ENCODE measurements at regions of chr6 and their contacts with region 1.

Region 1: GRCh38 chr6:150334790-150335783 is 33.7 kb upstream of the IYD start:
- DNase-seq: peak in 2 of 5 donors; percentile 27 to 29
- ATAC-seq: peak in 1 of 4 donors; percentile 54
- H3K4me3 ChIP-seq: no peak overlapping the region
- H3K27ac ChIP-seq: no peak overlapping the region
- H3K4me1 ChIP-seq: no peaks in the 10 kb centered on the region
- H3K27me3 ChIP-seq: no peaks in the 10 kb centered on the region
- CTCF ChIP-seq: peak; percentile 69 to 95 (median 84)
- POLR2A ChIP-seq: no peak

Region 2: DNA sequence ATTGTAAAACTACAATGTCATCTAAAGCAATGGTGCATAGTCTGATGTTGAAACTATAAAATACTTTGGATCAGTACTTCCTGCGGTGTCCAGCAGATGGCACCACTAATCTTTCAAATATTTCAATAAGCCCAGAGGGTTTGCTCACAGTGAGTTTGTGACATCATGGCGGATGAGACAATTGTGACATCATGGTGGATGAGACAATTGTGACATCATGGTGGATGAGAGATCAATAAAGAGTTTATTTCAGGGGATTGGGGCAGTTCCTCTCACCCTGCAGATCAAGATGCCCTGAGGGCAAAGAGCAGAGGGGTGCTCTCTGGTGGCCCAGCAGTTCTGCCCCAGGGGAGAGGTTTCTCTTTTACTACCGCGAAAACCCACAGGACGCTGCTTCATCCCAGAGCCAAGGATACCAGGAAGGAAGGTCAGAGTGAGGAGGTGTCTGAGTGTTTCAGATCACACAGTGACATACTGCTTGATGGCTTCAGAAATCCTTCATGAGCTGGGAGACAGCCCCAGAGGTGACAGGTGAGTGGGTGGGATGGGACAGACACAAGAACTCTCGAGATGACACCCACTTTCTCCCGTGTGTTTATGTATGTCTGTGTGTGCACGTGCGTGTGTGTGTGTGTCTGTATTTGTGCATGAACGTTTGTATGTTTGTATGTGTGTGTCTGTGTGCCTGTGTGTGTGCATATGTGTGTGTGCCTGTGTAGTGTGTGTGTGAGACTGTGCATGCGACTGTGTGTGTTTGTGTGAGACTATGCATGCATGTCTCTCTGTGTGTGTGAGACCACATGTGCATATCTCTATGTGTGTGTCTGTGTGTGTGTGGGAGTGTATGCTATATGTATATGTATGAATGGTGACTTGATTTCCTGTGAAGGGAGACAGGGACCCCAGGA is 400.6 kb before region 1 on chr6:
- intact Hi-C with region 1: loop called in 1 of 10 experiments (anchors 10 kb)
- DNase-seq: peak in 2 of 5 donors; percentile 34 to 44
- ATAC-seq: peak in 3 of 4 donors; percentile 65 to 77 (median 69)
- H3K4me3 ChIP-seq: no peak overlapping the region
- H3K27ac ChIP-seq: no peak overlapping the region
- H3K4me1 ChIP-seq: peaks cover 0 to 13% (median 10%) of the 10 kb centered on the region in 12 donors
- H3K27me3 ChIP-seq: peaks cover 22 to 96% (median 64%) of the 10 kb centered on the region in 9 donors
- CTCF ChIP-seq: peak; percentile 70 to 86 (median 79)
- POLR2A ChIP-seq: no peak

Region 3: DNA sequence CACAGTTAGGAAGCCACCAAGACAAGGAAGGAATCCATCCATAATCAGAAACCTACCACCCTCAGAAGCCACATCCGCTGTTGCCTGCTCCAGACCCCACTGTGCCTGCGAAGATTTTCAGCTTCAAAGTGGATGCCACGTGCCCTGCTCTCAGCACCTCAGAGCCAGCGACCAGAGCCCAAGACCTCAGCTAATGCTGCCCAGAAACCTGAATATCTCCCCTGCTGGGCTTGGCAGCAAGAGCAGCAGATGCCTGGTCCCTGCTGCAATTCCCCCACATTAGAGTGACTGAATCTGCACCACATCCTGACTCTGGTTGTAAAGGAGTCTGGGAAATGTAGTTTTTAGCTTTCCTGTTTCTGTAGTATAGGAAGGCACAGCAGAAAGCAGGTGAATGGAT is 255.5 kb before region 1 on chr6:
- intact Hi-C with region 1: loop called (anchors 1 to 2 kb)
- DNase-seq: no peak
- ATAC-seq: no peak
- H3K4me3 ChIP-seq: no peak overlapping the region
- H3K27ac ChIP-seq: no peak overlapping the region
- H3K4me1 ChIP-seq: no peaks in the 10 kb centered on the region
- H3K27me3 ChIP-seq: peaks cover 0 to 10% (median 0%) of the 10 kb centered on the region in 9 donors
- CTCF ChIP-seq: no peak
- POLR2A ChIP-seq: no peak

Region 4: DNA sequence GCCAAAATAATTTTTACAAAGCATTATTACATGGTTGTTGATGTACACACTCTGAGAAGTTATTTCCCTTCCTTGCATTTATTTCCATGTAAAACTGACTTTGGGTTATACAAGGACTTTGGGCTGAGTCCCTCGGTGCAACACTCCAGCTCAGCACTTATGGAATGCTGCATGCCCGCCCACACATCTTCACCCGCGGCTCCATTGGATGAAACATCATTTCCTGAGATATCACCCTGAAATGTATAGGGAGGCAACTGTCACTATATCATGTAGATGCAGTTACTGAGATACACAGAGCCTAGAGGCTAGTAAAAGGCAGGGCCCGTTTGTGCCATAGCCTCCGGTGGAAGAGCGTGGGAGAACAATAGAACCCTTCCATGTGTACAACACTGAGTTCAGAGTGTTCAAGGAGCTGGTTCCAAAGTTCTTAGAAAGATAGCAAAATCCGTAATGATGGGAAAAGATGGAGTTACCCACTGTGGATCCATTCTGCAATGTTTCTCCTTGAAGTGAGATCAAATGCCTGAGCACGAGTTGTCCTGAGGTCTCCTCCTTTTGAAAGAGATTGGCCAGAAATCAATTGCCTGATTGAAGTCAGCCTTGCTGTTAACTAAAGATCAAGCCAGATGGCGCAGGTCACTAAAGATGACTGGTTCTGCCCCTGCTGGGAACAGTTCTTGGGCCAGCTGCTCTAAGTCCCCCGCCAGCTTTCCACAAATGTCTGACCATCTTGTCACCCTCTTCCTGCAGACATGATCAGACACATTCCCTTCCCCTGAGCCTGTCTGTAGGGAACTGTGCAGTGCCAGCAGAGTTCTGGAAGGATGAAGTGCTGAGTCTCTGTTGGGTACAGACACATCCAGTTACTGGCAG is 67.2 kb before region 1 on chr6:
- intact Hi-C with region 1: loop called in 1 of 10 experiments (anchors 10 kb)
- DNase-seq: no peak
- ATAC-seq: peak in 1 of 4 donors; percentile 27
- H3K4me3 ChIP-seq: no peak overlapping the region
- H3K27ac ChIP-seq: no peak overlapping the region
- H3K4me1 ChIP-seq: no peaks in the 10 kb centered on the region
- H3K27me3 ChIP-seq: no peaks in the 10 kb centered on the region
- CTCF ChIP-seq: no peak
- POLR2A ChIP-seq: no peak

Region 5: DNA sequence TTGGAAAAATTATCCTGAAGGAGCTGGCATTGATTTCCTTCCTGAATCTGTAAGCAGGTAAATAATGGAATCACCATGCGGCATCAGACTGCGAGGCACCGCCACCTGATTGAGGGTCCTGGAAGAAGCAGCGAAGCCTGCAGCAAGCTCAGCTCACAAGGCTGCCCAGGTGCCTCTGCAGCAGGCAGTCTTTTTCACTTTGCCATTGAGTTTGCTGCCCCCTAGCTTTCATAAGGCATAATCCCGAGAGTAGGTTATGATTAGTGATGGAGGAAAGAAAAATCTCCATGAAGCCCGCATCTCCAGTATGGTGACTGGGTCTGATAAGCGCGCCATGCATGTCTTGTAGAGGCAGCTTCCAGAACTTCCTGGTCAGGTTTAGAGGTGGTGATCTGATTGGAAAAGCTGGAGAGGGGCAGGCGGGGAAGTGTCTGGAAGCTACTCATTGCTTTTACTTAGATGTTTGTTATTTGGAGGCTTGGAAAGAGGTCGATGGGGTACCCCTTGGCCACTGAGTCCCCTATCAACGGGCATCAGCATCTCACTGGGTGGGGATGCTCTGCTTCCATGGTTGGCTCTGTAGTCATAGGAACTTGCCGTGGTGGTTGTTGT is 60.4 kb after region 1 on chr6:
- intact Hi-C with region 1: loop called in 2 of 10 experiments (anchors 5 to 10 kb)
- DNase-seq: peak in 3 of 5 donors; percentile 34 to 43 (median 37)
- ATAC-seq: peak; percentile 58 to 78 (median 77)
- H3K4me3 ChIP-seq: no peak overlapping the region
- H3K27ac ChIP-seq: no peak overlapping the region
- H3K4me1 ChIP-seq: no peaks in the 10 kb centered on the region
- H3K27me3 ChIP-seq: peaks cover 0 to 3% (median 0%) of the 10 kb centered on the region in 9 donors
- CTCF ChIP-seq: peak; percentile 52 to 84 (median 72)
- POLR2A ChIP-seq: no peak

Region 6: DNA sequence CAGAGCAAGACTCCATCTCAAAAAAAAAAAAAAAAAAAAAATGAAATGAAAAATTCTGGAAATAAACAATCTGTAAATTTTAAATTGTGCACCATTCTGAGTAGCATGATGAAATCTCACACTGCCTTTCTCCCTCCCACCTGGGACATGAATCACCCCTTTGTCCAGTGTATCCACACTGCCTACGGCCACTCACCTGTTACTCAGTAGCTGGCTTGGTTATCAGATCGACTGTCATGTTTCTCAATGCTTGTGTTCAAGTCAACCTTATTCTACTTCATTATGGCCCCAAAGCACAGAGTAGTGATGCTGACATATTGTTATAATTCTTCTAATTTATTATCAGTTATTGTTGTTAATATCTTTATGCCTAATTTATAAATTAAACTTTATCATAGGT is 471.7 kb after region 1 on chr6:
- intact Hi-C with region 1: loop called in 1 of 10 experiments (anchors 5 kb)
- DNase-seq: no peak
- ATAC-seq: no peak
- H3K4me3 ChIP-seq: no peak overlapping the region
- H3K27ac ChIP-seq: no peak overlapping the region
- H3K4me1 ChIP-seq: no peaks in the 10 kb centered on the region
- H3K27me3 ChIP-seq: no peaks in the 10 kb centered on the region
- CTCF ChIP-seq: no peak
- POLR2A ChIP-seq: no peak

Measured in heart left ventricle (tissue), 16 donors.